ENCODE measurements at regions of chr10 and their contacts with region 1.

Region 1: DNA sequence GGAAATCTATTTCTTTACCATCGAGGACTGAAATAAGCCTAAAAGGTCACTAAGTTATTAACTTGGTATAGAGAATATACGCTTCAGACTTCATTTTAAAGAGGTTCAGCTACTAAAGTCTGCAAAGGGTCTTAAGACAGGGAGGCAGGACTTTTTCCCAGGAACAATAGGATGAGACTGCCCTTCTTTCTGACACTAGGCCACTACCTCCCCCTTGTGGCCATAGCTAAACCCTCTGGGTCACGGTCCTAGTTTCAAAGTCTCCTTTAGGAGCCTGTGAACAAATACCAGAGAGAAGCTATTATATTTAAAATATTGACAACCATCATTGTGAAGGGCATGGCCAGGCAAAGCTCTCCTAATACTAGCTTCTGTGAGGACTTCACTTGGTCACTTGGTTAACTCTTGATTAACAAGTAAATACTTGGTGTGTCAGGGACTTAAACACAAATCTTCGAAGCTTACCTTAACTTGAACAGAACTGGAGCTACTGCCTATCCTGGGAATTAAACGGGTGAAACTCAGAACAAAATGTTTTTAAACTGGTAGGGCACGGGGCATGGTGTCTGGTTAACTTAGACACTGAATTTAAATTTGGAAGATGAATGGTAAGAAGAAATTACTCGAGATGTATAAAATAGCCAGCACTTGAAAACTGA is 75.6 kb downstream of the CCDC6 start:
- DNase-seq: peak; percentile 70 to 77 (median 74)
- ATAC-seq: peak; percentile 92
- H3K4me3 ChIP-seq: no peak overlapping the region
- H3K27ac ChIP-seq: no peak overlapping the region
- H3K4me1 ChIP-seq: peaks cover 0 to 13% of the 10 kb centered on the region in 2 experiments; a peak in 4 of 5 replicates
- H3K27me3 ChIP-seq: no peaks in the 10 kb centered on the region
- CTCF ChIP-seq: peak; percentile 72 to 83 (median 76)
- EP300 ChIP-seq: no peak
- POLR2A ChIP-seq: no peak
- RAD21 ChIP-seq: peak; percentile 70 to 75

Region 2: DNA sequence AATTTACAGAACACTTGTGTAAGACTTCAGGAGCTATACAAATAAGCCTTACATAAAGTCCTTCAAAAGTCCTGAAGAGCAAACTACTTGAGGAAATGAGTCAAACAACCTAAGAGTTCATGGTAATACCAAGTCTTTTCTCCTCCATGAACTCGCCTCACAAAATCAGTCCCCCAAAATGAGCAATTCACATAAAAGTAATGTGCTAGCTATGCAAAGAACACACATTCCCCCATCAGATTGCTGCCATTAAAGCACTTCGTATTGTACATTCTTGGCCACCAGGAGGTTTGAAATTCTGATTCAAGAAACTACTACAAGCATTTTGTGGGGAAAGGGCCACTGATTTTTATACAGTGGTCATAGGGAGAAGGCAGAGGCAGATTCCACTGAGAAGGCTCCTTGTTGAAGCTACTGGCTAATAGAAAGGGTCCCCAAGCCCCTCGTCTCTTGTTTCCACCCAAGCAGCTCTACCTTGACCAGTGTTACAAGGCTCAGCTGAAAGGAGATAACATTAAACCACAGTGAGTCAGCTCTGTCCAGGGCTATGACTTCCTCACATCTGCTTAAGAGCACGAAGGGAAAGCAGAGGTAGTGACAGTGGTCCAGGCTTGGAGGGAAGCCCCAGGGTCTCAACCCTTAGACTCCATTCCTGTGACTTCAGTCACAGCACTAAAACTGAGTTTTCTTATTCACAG is 832.3 kb after region 1 on chr10:
- CTCF ChIA-PET with region 1: no interaction called
- POLR2A ChIA-PET with region 1: no interaction called
- in situ Hi-C with region 1: loop called (anchors 25 kb)
- intact Hi-C with region 1: no loop called
- DNase-seq: peak in 2 of 4 experiments; percentile 58 to 75
- ATAC-seq: peak; percentile 100
- H3K4me3 ChIP-seq: no peak overlapping the region
- H3K27ac ChIP-seq: no peak overlapping the region
- H3K4me1 ChIP-seq: peaks cover 0 to 14% of the 10 kb centered on the region in 2 experiments; a peak in 2 of 5 replicates
- H3K27me3 ChIP-seq: no peaks in the 10 kb centered on the region
- CTCF ChIP-seq: peak in 2 of 3 experiments; percentile 6 to 39; a peak in 2 of 6 replicates
- EP300 ChIP-seq: peak; percentile 28; the same call in 1 of the 2 replicates
- POLR2A ChIP-seq: no peak
- RAD21 ChIP-seq: no peak

Measured in K562 (cell line).